ENCODE measurements at regions of chr2 and their contacts with region 1.

Region 1: DNA sequence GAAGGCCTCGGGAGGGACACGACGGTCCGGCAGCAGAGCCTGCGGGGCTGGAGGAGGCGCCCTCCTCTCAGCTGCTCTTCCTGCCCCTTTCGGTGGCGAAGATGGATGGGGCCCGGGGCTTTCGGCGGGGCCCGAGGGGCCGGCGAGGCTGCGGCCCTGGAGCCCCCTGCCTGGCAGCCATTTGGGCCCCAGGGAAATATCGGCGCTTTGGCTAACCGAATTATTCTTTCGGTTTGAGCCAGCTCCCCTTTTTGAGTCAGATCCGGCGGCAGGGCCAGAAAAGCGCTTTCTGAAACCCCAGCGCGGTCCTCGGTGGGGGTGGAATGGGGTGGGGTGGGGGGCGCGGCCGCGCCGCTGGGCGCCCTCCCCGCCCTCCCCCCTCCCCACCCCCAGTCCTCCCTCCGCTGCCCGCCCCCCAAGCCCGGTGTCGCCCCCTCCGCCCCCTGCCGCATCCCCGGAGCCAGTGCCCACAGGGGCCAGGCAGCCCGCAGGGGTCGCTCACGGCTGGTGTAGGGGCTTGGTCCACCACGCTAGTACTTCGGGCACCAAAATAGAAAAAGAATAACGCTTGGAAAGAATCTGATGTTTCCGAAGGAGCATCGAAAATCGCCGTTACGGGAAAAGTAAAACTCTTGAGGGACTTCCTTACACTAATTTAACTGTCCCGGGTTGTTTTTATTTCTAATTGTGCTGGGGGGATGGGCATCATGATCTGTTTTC is 9.1 kb upstream of the ARID5A start:
- DNase-seq: peak in 1 of 2 donors; percentile 19
- H3K4me3 ChIP-seq: peak overlapping the region in 2 of 3 donors; percentile 36 to 43
- H3K27ac ChIP-seq: peak overlapping the region; percentile 41 to 80 (median 66)
- H3K4me1 ChIP-seq: peaks cover 8 to 43% of the 10 kb centered on the region in 2 donors
- H3K27me3 ChIP-seq: no peaks in the 10 kb centered on the region
- CTCF ChIP-seq: peak in 2 of 6 experiments; percentile 13 to 20
- POLR2A ChIP-seq: no peak

Region 2: DNA sequence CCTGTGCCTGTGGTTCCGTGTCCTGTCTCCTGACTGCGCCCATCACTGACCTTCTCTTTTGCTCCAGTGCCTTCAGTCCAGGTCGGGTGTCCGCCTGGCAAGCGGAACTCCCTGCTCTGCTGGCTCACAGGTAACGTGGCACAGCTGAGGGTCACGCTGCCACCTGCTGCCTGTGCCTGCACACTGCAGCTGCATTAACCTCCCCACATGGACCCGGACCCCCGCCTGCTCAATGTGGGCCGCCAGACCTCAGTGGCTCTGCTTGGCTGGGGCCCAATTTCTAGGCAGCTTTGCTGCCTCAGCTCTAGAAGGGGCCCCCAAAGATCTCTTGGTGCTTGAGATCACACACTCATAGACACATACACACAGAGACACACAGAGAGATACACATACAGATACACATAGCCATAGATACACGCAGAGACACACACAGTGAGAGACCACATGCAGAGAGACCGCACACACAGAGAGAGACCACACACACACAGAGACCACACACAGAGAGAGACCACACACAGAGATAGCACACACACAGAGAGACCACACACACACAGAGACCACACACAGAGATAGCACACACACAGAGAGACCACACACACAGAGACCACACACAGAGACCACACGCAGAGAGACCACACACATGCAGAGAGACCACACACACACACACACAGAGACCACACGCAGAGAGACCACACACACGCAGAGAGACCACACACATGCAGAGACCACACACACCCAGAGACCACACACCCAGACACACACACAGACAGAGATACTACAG is 273.7 kb after region 1 on chr2:
- intact Hi-C with region 1: loop called (anchors 10 kb)
- DNase-seq: peak; percentile 89 to 91
- H3K4me3 ChIP-seq: no peak overlapping the region
- H3K27ac ChIP-seq: no peak overlapping the region
- H3K4me1 ChIP-seq: peaks cover 3 to 4% of the 10 kb centered on the region in 2 donors
- H3K27me3 ChIP-seq: no peaks in the 10 kb centered on the region
- CTCF ChIP-seq: peak; percentile 69 to 97 (median 94)
- POLR2A ChIP-seq: no peak

Measured in thyroid gland (tissue), 4 donors.